Heart right ventricle (tissue), 16 donors: ENCODE measurements at regions of chr17 and their contacts with region 1.

Region 1: DNA sequence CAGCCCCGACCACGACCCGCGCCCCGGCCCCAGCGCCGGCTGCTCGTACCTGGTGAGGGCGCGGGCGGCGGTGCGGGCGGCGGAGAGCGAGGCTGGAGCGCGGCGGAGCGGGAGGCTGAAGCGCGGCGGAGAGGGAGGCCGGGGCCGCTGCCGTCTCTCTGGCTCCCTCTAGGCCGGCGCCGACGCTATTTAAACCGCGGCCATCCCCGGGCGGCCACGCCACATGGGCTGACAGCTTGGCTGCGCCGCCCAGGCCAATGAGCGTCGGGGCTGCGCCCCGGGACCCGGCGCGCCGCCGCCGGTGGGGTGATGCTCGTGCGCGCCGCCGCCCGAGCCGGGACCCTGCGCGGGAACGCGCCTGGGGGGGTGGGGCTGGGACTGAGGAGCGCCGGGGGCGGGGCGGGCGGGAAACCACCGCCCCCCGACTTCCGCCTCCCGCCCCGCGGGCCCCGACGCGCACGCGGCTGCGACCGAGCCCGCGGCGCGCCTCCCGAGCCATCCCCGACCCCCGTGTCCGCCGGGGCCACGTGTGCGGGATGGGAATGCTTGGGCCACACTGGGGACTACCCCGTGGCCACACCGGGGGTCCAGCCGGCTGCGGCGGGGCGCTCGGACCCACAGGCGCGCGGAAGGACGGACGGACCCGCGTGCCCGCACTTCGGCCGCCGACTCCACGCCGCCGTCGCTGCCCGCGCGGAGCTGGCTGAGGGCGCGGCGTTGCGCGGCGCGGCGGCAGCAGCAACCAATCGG is at the start of gene FASN:
- DNase-seq: peak; percentile 89 to 94
- ATAC-seq: peak; percentile 73 to 86 (median 82)
- H3K4me3 ChIP-seq: peak within 1 kb of the TSS; percentile 65 to 93 (median 86)
- H3K27ac ChIP-seq: peak within 1 kb of the TSS; percentile 89 to 100 (median 95)
- H3K4me1 ChIP-seq: peaks cover 13 to 44% (median 30%) of the 10 kb centered on the region in 9 donors
- H3K27me3 ChIP-seq: no peaks in the 10 kb centered on the region
- CTCF ChIP-seq: peak in 8 of 9 donors; percentile 29 to 67 (median 51)
- total RNA-seq, gene FASN: 9.0 to 62.4 (median 17.9) TPM

Region 2: GRCh38 chr17:82037113-82037888 is 60.9 kb before region 1 on chr17 and contains the start of gene DCXR:
- intact Hi-C with region 1: loop called in 5 of 10 experiments (anchors 1 to 10 kb)
- DNase-seq: peak; percentile 97 to 98
- ATAC-seq: peak; percentile 95 to 99 (median 98)
- H3K4me3 ChIP-seq: peak within 1 kb of the TSS; percentile 58 to 82 (median 72)
- H3K27ac ChIP-seq: peak within 1 kb of the TSS; percentile 90 to 97 (median 94)
- H3K4me1 ChIP-seq: peaks cover 4 to 24% (median 18%) of the 10 kb centered on the region in 9 donors
- H3K27me3 ChIP-seq: peaks cover 0 to 5% (median 2%) of the 10 kb centered on the region in 7 donors
- CTCF ChIP-seq: peak; percentile 68 to 94 (median 86)
- total RNA-seq, gene DCXR: 155 to 258 (median 187) TPM

Region 3: DNA sequence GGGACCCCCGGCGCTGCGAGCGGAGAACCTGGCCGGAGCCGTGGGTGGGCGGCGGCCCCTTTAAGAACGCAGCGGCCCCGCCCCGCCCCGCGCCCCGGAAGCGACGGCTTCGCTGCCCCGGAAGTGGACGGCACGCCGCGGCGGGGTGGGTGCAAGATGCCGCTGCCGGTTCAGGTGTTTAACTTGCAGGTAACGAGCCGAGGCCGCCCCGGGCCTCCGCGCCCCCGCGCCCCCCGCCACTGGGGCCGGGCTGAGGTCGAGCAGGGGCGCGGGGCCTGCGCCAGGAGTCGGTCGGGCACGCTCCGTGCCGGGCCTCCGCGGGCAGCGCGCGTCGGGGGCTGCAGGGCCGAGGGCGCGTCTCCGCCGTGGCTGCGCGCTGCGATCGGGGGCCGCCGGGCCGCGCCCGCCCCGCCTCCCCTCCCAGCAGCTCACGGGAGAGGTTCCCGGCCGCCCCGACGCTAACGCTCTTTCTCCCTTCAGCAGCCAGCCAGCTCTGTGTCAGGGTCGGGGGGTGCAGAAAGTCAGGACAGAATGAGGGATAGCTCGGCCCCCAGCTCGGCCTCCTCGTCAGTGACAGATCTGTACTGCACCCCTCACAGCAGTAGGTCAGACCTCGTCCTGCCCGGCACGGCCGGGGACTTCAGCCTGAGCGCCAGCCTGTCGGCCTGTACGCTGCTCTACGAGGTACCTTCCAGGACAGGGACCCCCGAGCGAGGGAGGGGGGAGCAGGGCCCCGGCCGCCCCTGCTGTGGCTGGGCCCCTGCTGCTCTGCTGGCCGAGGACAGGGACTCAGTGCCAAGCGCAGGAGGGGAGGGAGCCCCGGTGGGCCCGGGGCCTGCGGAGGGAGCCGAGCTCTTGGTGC is 46.2 kb before region 1 on chr17 and contains the starts of genes GPS1 and RFNG:
- intact Hi-C with region 1: loop called in 2 of 10 experiments (anchors 5 to 10 kb)
- DNase-seq: peak; percentile 69 to 84
- ATAC-seq: peak; percentile 27 to 82 (median 70)
- H3K4me3 ChIP-seq: peak within 1 kb of the TSS; percentile 73 to 97 (median 84)
- H3K27ac ChIP-seq: peak within 1 kb of the TSS in 9 of 10 donors; percentile 15 to 85 (median 71)
- H3K4me1 ChIP-seq: peaks cover 12 to 39% (median 28%) of the 10 kb centered on the region in 9 donors
- H3K27me3 ChIP-seq: no peaks in the 10 kb centered on the region
- CTCF ChIP-seq: no peak
- total RNA-seq, gene GPS1: 68.9 to 96.6 (median 80.6) TPM
- total RNA-seq, gene RFNG: 13.9 to 24.9 (median 18.9) TPM